Left ventricle myocardium superior (tissue), 1 donor: ENCODE measurements at regions of chr12 and their contacts with region 1.

Region 1: DNA sequence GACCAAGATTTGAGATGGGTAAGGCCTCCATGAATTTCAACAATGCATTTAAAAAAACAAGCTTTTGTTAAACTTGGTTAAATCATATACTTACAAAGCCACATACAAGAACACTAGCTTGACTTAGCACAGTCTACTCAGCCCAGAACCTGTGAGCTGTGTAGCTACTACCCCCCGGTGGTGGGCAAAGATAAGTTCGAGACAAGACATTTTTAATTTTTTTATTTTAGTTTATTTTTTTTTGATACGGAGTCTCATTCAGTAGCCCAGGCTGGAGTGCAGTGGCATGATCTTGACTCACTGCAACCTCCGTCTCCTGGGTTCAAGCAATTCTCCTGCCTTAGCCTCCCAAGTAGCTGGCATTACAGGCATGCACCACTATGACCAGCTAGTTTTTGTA is 3.7 kb upstream of the NECAP1 start:
- DNase-seq: no peak
- ATAC-seq: no peak

Region 2: GRCh38 chr12:8040791-8041190 is 37.6 kb before region 1 on chr12:
- intact Hi-C with region 1: loop called (anchors 5 kb)
- DNase-seq: no peak
- ATAC-seq: no peak

Region 3: GRCh38 chr12:8834230-8834629 is 755.8 kb after region 1 on chr12:
- intact Hi-C with region 1: no loop called
- DNase-seq: no peak
- ATAC-seq: no peak